ENCODE measurements at regions of chr19 and their contacts with region 1.

Region 1: DNA sequence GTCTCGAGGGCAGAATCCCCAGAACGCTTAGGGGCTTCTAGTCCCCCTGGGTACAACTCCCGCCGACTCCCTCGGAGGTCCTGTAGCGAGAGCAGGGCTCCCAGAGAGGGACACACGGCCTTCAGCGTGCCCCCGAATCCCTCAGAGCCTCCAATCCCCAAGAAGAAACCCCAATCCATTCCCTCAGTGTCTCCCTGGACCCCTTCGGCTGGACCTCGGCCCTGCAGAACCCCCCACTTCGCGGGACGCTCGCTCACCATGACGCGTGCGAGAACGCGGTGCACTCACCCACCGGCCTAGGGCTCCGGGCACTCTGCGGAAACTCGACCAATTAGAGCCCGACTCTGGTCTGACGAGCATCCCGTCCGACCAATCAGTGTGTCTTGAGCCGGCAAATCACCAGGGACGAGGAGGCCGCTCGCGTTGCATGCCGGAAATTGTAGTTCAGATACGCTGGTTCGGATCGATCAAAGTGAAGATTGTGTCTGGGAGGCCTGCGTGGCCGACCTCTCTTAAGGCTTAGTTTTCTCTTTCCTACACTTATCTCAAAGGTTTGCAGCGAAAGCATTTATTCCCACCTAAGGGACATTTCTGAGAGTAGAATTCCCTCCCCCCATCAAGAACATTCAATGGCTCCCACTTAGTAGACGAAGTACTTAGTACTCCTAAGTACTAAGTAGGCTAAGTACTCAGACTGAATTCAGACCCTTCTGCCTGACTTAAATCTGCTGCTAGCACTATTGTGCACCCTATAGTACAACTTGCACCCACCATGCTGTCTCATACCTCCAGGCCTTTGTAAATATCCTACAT is at the start of gene TMEM161A:
- DNase-seq: peak; percentile 99
- H3K4me3 Mint-ChIP-seq: peak within 1 kb of the TSS; percentile 99
- H3K27ac Mint-ChIP-seq: peak within 1 kb of the TSS; percentile 98
- H3K4me1 Mint-ChIP-seq: peaks cover 23% of the 10 kb centered on the region
- H3K27me3 Mint-ChIP-seq: no peaks in the 10 kb centered on the region
- total RNA-seq, gene TMEM161A: 40.7 and 44.1 TPM in 2 replicates

Region 2: DNA sequence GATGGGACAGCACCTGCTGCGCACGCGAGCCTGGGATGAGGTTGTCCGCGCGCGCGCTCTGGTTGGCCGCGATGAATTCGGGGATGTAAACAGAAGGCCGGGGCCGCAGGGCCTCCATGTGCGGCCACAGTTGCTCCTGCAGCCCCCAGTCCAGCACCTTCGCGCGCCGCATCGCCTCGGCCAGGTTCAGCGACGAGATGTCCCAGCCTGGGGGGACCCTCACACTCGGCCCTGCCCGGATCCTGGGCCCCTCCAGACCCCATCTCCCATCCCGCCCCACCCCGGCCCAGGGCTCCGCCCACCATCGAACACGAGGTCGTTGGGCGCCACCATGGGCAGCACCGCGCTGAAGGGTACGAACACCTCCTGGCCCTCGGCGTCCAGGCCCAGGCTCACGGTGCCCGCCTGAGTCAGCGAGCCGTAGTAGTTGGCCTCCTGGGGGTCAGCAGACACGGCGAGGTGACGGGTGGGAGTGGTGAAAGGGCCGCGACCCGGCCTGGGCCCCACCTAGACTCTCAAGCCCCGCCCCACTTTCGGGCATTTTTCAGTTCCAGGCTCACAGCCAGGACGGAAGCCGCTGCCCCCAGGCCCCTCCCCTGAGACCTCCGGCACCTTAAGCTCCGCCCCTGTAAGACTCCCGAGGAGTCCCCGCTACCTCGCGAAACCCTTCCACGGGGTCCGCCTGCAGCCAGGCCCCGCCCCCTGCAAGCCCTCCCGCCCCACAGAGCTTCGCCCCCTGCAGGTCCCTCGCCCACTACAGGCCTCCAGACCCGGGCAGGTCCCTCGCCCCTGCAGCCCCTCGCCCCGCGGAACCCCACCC is 701.5 kb before region 1 on chr19:
- intact Hi-C with region 1: no loop called
- DNase-seq: peak; percentile 91
- H3K4me3 Mint-ChIP-seq: peak overlapping the region; percentile 73
- H3K27ac Mint-ChIP-seq: peak overlapping the region; percentile 20
- H3K4me1 Mint-ChIP-seq: peaks cover 17% of the 10 kb centered on the region
- H3K27me3 Mint-ChIP-seq: no peaks in the 10 kb centered on the region

Region 3: GRCh38 chr19:19033426-19034203 is 104.8 kb before region 1 on chr19 and contains the starts of genes ARMC6 and SUGP2:
- intact Hi-C with region 1: loop called (anchors 2 kb)
- DNase-seq: peak; percentile 97
- H3K4me3 Mint-ChIP-seq: peak within 1 kb of the TSS; percentile 95
- H3K27ac Mint-ChIP-seq: peak within 1 kb of the TSS; percentile 96
- H3K4me1 Mint-ChIP-seq: peaks cover 32% of the 10 kb centered on the region
- H3K27me3 Mint-ChIP-seq: peaks cover 1% of the 10 kb centered on the region
- total RNA-seq, gene ARMC6: 57.7 and 61.9 TPM in 2 replicates
- total RNA-seq, gene SUGP2: 114 and 128 TPM in 2 replicates

Region 4: DNA sequence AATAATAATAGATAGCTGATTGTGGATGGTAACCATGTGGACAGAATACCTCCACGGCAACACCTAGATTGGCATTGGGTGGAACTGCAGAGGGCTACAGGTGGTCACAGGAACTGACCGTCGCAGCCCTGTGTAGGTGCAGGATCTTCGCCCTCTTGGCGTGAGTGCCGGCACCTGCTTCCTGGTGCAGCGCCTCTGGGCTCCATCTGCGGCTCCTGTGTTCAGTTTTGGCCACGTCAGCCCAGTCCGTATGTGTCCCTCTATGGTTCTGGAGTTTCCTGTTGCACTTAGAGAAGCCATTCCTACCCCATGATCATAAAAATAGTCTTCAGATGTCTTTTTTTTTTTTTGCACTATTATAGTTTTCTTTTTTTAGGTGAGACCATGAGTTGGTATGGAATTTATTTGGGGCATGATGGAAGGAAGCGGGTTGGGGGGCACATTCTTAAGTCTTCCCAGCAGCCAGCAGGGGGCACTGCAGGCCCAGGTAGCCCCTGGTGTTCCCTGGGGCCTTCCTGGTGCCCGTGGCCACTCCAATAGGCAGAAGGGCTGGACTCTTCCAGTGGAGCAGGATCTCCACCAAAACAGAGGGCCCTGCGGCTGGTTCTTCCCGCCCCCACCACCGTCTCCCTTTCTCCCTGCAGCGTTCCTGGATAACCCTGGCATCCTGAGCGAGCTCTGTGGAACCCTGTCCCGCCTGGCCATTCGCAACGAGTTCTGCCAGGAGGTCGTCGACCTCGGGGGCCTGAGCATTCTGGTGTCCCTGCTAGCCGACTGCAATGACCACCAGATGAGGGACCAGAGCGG is 84.7 kb before region 1 on chr19:
- intact Hi-C with region 1: loop called (anchors 1 kb)
- DNase-seq: peak; percentile 86
- H3K4me3 Mint-ChIP-seq: no peak overlapping the region
- H3K27ac Mint-ChIP-seq: no peak overlapping the region
- H3K4me1 Mint-ChIP-seq: no peaks in the 10 kb centered on the region
- H3K27me3 Mint-ChIP-seq: no peaks in the 10 kb centered on the region

Region 5: DNA sequence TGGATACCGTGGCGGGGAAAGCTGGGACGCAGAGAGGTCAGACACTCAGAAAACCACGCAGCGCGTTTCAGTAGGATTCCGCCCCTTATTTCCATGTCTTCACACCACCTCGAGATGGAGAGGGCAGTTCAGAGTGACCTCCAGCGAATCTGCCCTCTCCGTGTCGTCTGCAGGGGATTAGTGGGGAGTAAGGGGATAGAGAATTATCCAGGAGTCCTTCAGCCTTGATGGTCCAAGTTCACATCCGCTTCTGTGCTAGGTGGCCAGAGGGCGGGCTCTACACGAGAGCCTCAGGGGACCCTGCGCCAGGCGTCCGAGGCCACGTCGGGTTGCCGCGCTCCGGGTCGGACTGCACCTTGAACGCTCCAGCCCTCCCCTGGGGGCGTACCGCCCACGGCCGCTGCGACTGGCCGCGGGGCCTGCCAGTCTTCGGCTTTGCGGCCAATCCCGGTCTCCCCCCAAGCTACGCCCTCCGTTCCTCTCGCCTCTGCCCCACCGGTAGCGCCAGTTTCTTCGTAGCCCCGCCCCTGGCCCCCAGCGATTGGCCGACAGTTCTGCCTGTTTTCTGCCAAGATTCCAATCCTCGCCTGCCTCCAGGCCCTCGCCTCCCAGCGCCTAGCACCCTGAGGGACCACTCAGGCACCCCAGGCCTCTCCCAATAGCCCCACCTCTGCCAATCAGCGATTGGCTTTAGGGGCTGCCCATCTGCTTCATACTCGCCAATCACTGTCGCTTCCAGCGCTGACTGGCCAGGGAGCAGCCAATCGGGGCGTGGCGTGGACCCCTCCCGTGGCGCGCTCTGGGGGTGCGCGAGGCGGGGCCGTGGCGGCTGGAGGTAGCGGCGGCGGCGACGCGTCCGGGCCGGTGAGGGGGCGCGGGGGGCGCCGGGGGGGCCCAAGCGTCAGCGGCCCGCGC is 74.9 kb before region 1 on chr19 and contains the start of gene SLC25A42:
- intact Hi-C with region 1: loop called (anchors 2 kb)
- DNase-seq: peak; percentile 100
- H3K4me3 Mint-ChIP-seq: peak within 1 kb of the TSS; percentile 88
- H3K27ac Mint-ChIP-seq: peak within 1 kb of the TSS; percentile 83
- H3K4me1 Mint-ChIP-seq: peaks cover 27% of the 10 kb centered on the region
- H3K27me3 Mint-ChIP-seq: no peaks in the 10 kb centered on the region
- total RNA-seq, gene SLC25A42: 8.0 and 8.1 TPM in 2 replicates

Region 6: DNA sequence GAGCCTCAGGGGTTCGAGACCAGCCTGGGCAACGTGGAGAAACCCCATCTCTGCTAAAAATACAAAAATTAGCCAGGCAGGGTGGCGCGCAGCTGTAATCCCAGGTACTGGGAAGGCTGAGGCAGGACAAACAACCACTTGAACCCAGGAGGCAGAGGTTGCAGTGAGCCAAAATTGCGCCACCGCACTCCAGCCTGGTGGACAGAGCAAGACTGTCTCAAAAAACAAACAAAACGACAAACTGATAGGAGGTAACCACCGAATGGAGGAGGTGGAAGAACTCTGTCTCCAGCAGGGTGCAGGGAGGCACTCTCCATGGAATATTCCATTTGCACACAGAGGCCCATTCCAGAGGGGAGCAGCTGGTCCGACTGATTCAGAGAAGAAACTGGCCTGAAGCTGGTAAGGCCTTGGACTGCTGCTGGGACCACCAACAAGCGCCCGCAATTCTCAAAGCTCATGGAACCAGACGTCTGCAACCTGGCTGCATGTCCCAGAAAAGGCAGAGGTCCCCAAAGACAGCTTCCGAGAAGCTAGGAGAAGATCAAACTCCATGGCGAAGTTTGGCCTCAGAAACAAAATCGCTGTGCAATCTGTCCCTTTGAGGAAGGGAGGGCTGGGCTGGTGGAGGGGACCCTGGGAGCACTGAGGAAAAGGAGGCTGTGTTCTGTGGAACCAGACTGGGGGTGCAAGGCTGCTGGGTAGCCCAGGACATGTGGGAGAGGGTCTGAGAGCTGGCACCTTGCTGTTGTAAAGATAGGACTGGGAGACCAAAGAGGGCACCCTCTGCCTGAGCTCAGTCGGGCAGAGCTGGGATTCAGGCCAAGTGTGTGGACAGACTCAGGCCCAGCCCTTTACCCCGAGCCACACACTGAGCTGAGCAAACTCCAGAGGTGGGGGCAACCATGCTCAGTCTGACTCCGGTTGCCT is 39.4 kb before region 1 on chr19:
- intact Hi-C with region 1: no loop called
- DNase-seq: no peak
- H3K4me3 Mint-ChIP-seq: no peak overlapping the region
- H3K27ac Mint-ChIP-seq: no peak overlapping the region
- H3K4me1 Mint-ChIP-seq: no peaks in the 10 kb centered on the region
- H3K27me3 Mint-ChIP-seq: no peaks in the 10 kb centered on the region

Region 7: DNA sequence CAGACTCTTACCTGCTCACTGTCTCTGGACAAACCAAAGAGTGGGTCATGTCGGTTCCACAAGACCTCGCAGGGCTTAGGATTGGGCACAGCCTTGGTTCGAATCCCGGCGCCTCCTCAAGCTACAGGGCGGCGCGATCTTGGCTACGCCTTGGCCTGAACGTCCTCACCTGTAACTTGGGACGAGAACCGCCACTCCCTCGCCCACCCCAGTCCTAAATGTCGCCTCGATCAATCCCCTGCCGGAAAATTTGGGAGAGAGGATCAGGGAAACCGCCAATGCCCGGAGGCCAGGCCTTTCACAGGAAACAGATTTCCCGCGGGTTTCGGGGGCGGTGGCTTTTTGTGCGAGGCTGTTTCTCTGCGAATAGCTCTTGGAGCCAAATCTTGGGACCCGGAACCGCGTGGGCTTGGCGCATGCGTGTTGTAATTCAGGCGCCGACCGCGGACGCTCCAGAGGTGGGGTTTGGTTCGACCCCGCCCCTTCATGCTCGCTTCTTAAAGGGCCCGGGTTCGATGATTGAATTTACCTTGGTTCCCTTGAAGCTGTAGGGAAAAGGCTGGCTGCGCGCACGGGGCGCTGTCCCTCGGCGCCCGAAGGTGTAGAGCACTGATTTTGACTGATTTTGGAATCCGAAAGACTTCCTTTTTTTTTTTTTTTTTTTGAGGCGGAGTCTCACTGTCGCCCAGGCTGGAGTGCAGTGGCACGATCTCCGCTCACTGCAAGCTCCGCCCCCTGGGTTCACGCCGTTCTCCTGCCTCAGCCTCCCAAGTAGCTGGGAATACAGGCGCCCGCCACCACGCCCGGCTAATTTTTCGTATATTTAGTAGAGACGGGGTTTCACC is 64.9 kb after region 1 on chr19 and contains the start of gene NR2C2AP:
- intact Hi-C with region 1: loop called (anchors 2 kb)
- DNase-seq: peak; percentile 98
- H3K4me3 Mint-ChIP-seq: peak within 1 kb of the TSS; percentile 95
- H3K27ac Mint-ChIP-seq: peak within 1 kb of the TSS; percentile 90
- H3K4me1 Mint-ChIP-seq: peaks cover 29% of the 10 kb centered on the region
- H3K27me3 Mint-ChIP-seq: no peaks in the 10 kb centered on the region
- total RNA-seq, gene NR2C2AP: 48.3 and 52.3 TPM in 2 replicates

Measured in activated CD4-positive, alpha-beta T cell treated with anti-CD3 and anti-CD28 coated beads, Interleukin-2, amount 10 ng/mL, durations not matched to agents 24 days and 14 days (primary cell).